ENCODE measurements at regions of chr19 and their contacts with region 1.

Region 1: GRCh38 chr19:41706741-41707501 is 1.5 kb upstream of the CEACAM5 start:
- DNase-seq: peak; percentile 88
- ATAC-seq: peak; percentile 96
- H3K4me3 Mint-ChIP-seq: peak overlapping the region; percentile 69
- H3K27ac Mint-ChIP-seq: no peak overlapping the region
- H3K4me1 Mint-ChIP-seq: 0 out of 2 replicates have a peak, but pooled peaks cover 2% of the 10 kb centered on the region
- H3K27me3 Mint-ChIP-seq: peaks cover 22% of the 10 kb centered on the region
- CTCF ChIP-seq: peak; percentile 96

Region 2: DNA sequence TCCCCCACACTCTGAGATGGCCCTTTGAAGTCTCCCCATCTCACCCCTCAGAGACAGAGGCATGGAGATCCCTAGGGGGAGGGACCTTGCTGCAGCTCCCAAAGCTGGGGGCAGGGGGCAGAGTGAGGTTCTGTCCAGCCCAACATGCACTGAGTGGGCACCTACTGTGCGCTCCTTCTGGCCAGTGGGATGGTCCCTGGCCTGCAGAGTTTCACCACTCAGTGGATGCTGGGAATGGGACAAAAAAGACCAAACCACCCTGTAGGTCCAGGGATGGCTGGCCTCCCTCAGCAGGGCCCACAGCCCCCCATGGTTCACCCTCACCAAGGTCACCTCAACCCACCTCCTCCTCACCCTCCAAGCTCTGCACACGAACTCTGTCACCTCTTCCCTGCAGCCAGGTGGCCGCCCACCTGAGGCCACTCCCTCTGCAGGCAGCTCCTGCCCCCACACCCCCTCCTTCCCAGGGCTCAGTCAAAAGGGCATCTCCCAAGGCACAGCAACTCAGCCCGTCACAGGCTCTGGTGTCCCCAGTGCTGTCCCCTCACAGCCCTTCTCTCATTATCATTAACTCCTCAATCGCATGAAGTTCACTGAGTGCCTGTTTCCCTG is 114.9 kb before region 1 on chr19:
- CTCF ChIA-PET with region 1: interaction called, 16 read pairs
- POLR2A ChIA-PET with region 1: no interaction called
- DNase-seq: peak; percentile 22
- ATAC-seq: peak; percentile 56
- H3K4me3 Mint-ChIP-seq: no peak overlapping the region
- H3K27ac Mint-ChIP-seq: no peak overlapping the region
- H3K4me1 Mint-ChIP-seq: no peaks in the 10 kb centered on the region
- H3K27me3 Mint-ChIP-seq: peaks cover 66% of the 10 kb centered on the region
- CTCF ChIP-seq: no peak

Region 3: GRCh38 chr19:41657157-41657556 is 49.8 kb before region 1 on chr19:
- CTCF ChIA-PET with region 1: interaction called, 15 read pairs
- POLR2A ChIA-PET with region 1: no interaction called
- DNase-seq: no peak
- ATAC-seq: no peak; the same call in 1 of the 2 replicates
- H3K4me3 Mint-ChIP-seq: no peak overlapping the region
- H3K27ac Mint-ChIP-seq: no peak overlapping the region
- H3K4me1 Mint-ChIP-seq: peaks cover 24% of the 10 kb centered on the region
- H3K27me3 Mint-ChIP-seq: peaks cover 38% of the 10 kb centered on the region
- CTCF ChIP-seq: no peak

Region 4: DNA sequence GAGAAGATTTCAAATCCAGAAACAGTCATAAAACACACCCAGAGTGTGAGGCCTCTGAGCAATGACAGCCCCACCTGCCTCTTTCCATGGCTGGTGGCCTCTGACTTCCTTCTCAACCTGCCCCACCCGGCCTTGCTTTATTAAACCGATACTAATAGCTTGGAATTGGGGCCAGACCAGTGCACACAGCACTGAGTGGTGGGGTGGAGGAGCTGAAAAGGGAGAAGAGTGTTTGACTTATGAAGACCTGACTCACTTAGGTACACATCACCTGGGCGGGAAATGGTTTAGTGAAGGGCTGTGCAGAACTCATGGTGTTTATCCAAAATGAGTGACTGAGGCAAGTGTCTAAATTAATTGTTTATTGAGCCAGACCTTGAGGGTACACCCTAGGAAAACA is 27.7 kb after region 1 on chr19:
- CTCF ChIA-PET with region 1: interaction called, 17 read pairs
- POLR2A ChIA-PET with region 1: no interaction called
- DNase-seq: no peak
- ATAC-seq: no peak
- H3K4me3 Mint-ChIP-seq: no peak overlapping the region
- H3K27ac Mint-ChIP-seq: no peak overlapping the region
- H3K4me1 Mint-ChIP-seq: no peaks in the 10 kb centered on the region
- H3K27me3 Mint-ChIP-seq: peaks cover 3% of the 10 kb centered on the region
- CTCF ChIP-seq: no peak

Region 5: DNA sequence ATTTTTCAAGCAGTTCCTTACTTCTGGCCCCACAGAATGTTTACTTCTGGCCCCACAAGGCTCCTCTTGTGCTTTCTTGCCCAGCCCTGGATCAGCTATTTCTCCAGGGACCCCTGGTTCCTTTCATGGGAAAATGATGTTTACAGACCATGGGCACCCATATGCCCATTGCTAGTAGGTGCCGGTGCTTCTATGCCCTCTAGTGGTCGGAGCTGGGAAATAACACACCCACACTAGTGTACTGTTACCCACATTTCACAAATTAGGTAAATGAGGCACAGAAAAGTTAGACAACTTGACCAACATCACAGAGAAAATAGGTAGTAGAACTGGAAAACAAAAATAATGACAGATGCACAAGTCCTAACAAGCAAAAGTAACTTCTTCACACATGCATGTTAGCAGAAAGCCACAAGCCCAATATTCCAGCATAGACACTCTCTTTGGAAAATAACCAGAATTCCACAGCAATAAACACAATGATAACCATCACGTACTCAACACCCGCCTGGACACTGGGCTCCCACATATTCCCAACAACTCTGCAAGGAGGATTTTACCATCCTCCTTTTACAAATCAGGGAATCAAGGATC is 47.1 kb after region 1 on chr19:
- CTCF ChIA-PET with region 1: interaction called, 131 read pairs
- POLR2A ChIA-PET with region 1: no interaction called
- DNase-seq: peak; percentile 79
- ATAC-seq: peak; percentile 81
- H3K4me3 Mint-ChIP-seq: no peak overlapping the region
- H3K27ac Mint-ChIP-seq: peak overlapping the region; percentile 48; the same call in 1 of the 2 replicates
- H3K4me1 Mint-ChIP-seq: peaks cover 2% of the 10 kb centered on the region; the same call in 1 of the 2 replicates
- H3K27me3 Mint-ChIP-seq: peaks cover 6% of the 10 kb centered on the region
- CTCF ChIP-seq: peak; percentile 74

Region 6: DNA sequence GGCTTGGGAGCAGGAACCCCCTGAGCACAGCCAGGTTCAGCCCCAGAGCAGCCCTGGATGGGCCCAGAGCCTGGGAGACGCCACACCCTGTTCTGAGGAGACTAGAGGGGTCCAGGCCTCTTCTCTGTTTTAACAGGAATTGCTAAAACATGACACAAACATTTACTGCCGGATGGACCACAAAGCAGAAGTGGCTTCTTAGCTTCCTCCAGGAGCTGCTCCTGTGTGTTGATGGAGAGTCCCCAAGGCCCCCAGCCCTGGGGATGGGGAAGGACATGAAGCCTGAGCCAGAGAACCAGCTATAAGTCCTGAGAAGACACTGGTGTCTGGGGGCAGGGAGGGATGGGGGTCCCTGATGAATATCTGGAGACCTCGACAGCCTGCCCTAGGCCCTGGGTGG is 104.1 kb after region 1 on chr19:
- CTCF ChIA-PET with region 1: interaction called, 12 read pairs
- POLR2A ChIA-PET with region 1: no interaction called
- DNase-seq: no peak
- ATAC-seq: no peak
- H3K4me3 Mint-ChIP-seq: no peak overlapping the region
- H3K27ac Mint-ChIP-seq: no peak overlapping the region
- H3K4me1 Mint-ChIP-seq: no peaks in the 10 kb centered on the region
- H3K27me3 Mint-ChIP-seq: no peaks in the 10 kb centered on the region; the same call in 1 of the 2 replicates
- CTCF ChIP-seq: no peak

Region 7: GRCh38 chr19:41859618-41860418 is 152.9 kb after region 1 on chr19 and contains the start of gene RPS19:
- CTCF ChIA-PET with region 1: interaction called, 14 read pairs
- POLR2A ChIA-PET with region 1: no interaction called
- DNase-seq: peak; percentile 98
- ATAC-seq: peak; percentile 89
- H3K4me3 Mint-ChIP-seq: peak within 1 kb of the TSS; percentile 94
- H3K27ac Mint-ChIP-seq: peak within 1 kb of the TSS; percentile 99
- H3K4me1 Mint-ChIP-seq: peaks cover 43% of the 10 kb centered on the region
- H3K27me3 Mint-ChIP-seq: peaks cover 13% of the 10 kb centered on the region
- CTCF ChIP-seq: 0 out of 2 replicates have a peak, but pooled peaks have one; percentile 23
- total RNA-seq, gene RPS19: 3,152 to 3,787 TPM (median 3,713 TPM) in 3 replicates

Region 8: DNA sequence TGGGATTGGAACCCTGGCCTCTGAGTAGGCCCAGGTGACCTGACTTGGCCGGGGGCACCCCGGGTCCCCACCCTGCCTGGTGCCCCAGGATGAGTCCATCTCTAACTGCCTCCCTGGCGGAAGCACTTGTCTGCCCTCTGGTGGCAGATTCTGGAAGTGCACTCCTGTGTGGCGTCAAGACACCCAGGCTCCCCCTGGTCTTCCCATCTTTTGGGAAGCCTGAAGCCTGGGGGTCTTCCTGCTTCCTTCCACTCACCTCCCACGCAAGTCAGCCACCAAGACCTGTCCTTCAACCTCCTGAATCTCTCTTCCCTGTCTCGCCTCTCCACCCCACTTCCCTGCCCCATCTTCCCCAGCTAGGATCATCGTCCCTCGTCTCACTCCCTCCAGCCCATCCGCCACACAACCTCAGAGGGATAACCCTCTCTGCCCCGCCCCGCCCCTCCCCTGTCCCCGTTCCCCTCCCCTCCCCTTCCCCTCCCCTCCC is 244.8 kb after region 1 on chr19:
- CTCF ChIA-PET with region 1: no interaction called
- POLR2A ChIA-PET with region 1: no interaction called
- DNase-seq: peak; percentile 97
- ATAC-seq: peak; percentile 93
- H3K4me3 Mint-ChIP-seq: peak overlapping the region; percentile 65
- H3K27ac Mint-ChIP-seq: no peak overlapping the region
- H3K4me1 Mint-ChIP-seq: no peaks in the 10 kb centered on the region
- H3K27me3 Mint-ChIP-seq: peaks cover 15% of the 10 kb centered on the region
- CTCF ChIP-seq: peak; percentile 100

Measured in WTC11 (cell line).